Posterior vena cava (tissue), 2 donors: ENCODE measurements at regions of chr1 and their contacts with region 1.

Region 1: DNA sequence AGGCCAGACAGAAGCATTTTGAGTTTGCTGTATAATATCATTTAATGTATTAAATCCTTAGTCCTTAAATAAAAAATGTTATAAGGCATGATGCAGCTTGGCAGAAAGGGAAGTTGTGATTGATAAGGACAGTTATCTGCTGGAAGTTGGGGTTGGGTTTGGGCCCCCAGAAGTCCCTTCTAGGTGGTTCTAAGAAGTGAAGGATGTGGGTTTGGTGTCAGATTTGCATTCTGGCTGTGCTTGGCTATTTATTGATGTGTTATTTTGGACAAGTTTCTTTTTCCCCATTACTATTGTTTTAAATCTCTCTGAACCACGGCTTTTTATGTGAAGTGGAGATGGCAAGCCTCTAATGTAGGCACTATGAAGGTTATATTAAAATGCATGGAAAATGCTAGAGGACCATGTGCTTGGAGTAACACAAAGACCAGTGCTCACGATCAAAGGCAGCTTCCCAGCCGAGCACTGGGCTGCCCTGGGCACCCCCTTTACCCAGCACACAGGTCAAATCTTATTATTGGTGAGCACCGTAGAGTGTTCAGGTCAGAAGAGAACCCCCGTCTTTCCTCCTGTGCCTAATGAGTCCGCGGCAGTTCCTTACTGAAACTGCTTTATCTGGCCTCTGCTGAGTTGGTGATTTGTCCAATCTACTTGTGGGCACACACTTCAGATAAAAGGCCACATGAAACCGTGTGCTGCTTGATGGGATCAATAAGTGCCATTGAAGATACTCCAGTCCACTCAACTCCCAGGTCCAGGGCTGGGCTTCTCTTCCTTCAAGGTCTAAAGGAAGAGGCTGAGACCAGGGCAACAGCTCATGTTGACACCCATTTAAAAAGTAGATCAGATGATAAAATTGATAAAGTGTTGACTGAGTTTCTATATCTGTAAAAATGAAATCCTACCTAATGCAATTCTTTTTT is 212.0 kb downstream of the PRDM2 start:
- DNase-seq: no peak

Region 2: GRCh38 chr1:13702425-13703127 is 209.4 kb before region 1 on chr1:
- intact Hi-C with region 1: no loop called
- DNase-seq: no peak

Region 3: DNA sequence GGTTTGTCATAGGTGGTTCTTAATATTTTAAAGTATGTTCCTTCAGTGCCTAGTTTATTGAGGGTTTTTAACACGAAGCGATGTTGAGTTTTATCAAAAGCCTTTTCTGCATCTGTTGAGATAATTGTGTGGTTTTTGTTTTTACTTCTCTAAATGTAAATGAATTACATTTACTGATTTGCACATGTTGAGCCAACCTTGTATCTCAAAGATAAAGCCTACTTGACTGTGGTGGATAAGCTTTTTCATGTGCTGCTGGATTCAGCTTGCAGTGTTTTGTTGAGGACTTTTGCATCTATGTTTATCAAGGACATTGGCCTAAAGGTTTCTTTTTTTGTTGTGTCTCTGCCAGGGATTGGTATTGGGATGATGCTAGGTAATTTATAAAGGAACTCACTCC is 69.5 kb before region 1 on chr1:
- intact Hi-C with region 1: loop called in 1 of 2 experiments (anchors 2 kb)
- DNase-seq: no peak